CD4-positive, alpha-beta memory T cell (primary cell): ENCODE measurements at regions of chr6 and their contacts with region 1.

Region 1: DNA sequence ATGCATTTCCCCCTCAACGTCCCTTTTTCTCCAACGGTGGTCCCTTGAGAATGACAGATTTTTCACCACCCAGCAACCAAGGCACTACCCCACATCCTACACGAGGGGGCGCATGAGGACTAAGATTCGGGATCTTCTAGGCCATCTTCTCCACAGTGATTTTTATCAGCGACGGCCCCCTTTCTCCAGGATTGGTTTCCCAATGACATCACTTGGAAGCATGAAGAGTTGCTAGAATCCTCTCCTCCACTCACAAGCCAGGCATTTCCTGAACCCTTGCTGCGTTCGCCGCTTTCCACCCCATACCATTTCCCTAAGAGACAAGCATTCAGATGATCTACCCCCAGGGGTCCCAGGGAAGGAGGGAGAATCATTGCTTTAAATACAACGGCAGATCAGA is 252.0 kb downstream of the HIVEP2 start:
- DNase-seq: peak; percentile 54 to 62 (median 58)
- H3K4me3 ChIP-seq: no peak overlapping the region
- H3K4me3 Mint-ChIP-seq: peak overlapping the region in 1 of 8 donors; percentile 58
- H3K27ac ChIP-seq: no peak overlapping the region
- H3K27ac Mint-ChIP-seq: peak overlapping the region in 4 of 7 donors; percentile 0 to 74 (median 60)
- H3K4me1 ChIP-seq: peaks cover 7% of the 10 kb centered on the region
- H3K4me1 Mint-ChIP-seq: peaks cover 5 to 21% (median 8%) of the 10 kb centered on the region in 4 donors
- H3K27me3 ChIP-seq: no peaks in the 10 kb centered on the region
- H3K27me3 Mint-ChIP-seq: no peaks in the 10 kb centered on the region

Region 2: DNA sequence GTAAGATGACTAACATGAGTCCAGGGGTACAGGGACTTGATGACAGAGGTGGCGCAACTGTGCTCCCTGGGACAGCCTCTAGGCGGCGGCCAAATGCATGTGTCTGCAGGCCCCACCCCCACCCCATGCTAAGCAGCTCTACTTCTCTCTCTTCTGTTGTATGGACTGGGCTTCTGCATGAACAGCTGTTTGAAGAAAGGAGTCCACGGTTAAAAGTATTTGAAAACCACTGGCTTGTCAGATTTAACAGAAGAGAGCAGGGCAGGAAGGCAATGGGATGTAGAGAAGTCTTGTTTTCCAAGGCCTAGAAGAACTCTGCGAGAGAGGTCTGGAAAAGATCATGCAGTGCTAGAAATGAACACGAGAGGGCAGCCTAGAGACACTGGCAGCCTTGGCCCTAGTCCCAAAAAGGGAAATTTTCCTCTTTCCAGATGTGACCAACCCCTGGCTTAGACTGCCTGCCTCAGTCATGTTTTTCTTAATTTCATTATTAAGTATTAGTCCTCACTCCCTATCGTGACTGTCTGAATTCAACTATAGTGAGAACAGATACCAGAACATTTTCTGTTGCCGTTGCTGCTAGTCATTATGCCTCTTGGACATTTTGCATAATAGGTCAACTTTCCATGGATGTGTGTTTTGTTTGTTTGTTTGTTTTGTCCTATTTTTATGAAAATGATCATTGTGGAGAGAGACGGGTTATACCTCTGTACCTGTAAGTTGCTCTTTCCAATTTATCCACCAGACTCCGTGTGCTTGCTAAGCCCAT is 126.1 kb before region 1 on chr6:
- CTCF ChIA-PET with region 1: interaction called, 3 read pairs
- POLR2A ChIA-PET with region 1: no interaction called
- intact Hi-C with region 1: loop called (anchors 1 kb)
- DNase-seq: peak; percentile 47 to 49 (median 48)
- H3K4me3 ChIP-seq: no peak overlapping the region
- H3K4me3 Mint-ChIP-seq: peak overlapping the region in 2 of 8 donors; percentile 29 to 53
- H3K27ac ChIP-seq: no peak overlapping the region
- H3K27ac Mint-ChIP-seq: peak overlapping the region in 6 of 7 donors; percentile 24 to 64 (median 40)
- H3K4me1 ChIP-seq: peaks cover 52% of the 10 kb centered on the region
- H3K4me1 Mint-ChIP-seq: peaks cover 34 to 59% (median 51%) of the 10 kb centered on the region in 4 donors
- H3K27me3 ChIP-seq: no peaks in the 10 kb centered on the region
- H3K27me3 Mint-ChIP-seq: no peaks in the 10 kb centered on the region

Region 3: DNA sequence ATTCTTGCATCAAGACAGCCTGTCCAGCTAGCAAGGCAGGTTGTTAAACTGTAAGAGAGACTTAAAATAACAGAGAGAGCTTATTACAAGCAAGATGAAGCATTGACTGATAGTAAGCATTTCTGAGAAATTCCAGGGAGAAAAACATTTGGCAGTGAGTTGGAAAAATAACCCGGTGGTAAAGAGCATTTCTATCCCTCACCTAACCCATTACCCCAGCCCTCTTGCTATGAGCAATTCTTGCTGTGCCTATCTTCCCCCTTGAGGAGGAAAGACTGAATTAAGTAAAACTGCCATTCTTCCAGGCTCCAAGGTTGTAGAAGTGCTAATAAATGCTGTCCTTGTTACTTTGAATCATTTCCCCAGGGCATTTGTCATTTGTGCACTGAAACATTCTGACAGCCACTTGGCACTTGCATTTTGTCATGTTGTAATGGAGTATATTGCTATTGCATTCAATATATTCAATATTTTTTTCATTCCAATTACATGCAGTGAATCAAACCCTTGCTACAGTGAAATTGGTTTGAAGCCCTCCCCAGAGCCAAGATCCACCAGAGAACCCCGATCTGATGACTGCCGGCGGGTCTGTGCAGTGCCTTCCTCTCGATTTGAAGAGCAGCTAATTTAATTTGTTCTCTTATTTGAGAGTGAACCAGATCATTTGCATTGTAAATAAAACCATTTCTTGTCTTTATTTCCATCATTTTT is 39.1 kb before region 1 on chr6:
- CTCF ChIA-PET with region 1: no interaction called
- POLR2A ChIA-PET with region 1: no interaction called
- intact Hi-C with region 1: no loop called
- DNase-seq: no peak
- H3K4me3 ChIP-seq: no peak overlapping the region
- H3K4me3 Mint-ChIP-seq: no peak overlapping the region
- H3K27ac ChIP-seq: no peak overlapping the region
- H3K27ac Mint-ChIP-seq: no peak overlapping the region
- H3K4me1 ChIP-seq: no peaks in the 10 kb centered on the region
- H3K4me1 Mint-ChIP-seq: peaks cover 0 to 2% (median 0%) of the 10 kb centered on the region in 4 donors
- H3K27me3 ChIP-seq: no peaks in the 10 kb centered on the region
- H3K27me3 Mint-ChIP-seq: peaks cover 7 to 9% of the 10 kb centered on the region in 2 donors

Region 4: DNA sequence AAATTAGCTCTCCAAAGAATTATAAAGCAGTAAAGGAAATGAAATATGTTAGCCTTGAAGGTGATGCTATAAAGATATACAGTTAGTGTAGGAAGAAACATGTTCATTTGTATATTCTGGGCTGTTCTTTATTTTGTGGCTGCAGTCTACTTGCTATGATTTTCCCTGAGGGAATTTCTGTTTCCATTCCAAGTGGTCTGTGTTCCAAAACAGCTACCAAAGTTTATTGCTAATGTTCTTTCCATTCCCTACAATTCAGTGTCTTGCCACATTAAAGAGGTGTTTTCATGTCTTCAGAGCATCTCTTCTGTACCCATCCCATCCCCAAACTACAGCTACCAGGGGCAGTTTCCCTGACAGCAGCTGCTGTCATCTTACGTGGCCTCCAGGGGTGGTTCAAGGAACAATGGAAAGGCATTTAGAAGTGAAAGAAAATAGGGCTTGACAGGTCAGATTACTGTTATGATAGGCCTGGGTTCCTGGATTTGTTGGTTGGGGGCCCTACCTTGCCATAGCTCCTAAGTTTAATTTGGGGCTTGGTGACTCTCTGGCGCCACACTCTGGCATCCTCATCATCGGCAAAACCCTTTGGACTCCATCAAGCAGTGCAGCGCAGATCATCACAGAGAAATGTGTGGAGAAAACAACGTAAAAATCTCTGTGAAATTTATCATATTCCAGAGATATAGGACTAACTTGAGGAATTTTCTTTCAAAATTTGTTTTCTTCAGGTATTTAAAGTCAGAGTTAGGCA is 333.9 kb after region 1 on chr6:
- CTCF ChIA-PET with region 1: interaction called, 81 read pairs
- POLR2A ChIA-PET with region 1: no interaction called
- intact Hi-C with region 1: loop called (anchors 1 kb)
- DNase-seq: peak; percentile 28 to 47 (median 36)
- H3K4me3 ChIP-seq: no peak overlapping the region
- H3K4me3 Mint-ChIP-seq: no peak overlapping the region
- H3K27ac ChIP-seq: no peak overlapping the region
- H3K27ac Mint-ChIP-seq: peak overlapping the region in 2 of 7 donors; percentile 13 to 68
- H3K4me1 ChIP-seq: no peaks in the 10 kb centered on the region
- H3K4me1 Mint-ChIP-seq: peaks cover 0 to 7% (median under 1%) of the 10 kb centered on the region in 4 donors
- H3K27me3 ChIP-seq: no peaks in the 10 kb centered on the region
- H3K27me3 Mint-ChIP-seq: no peaks in the 10 kb centered on the region

Region 5: GRCh38 chr6:143337201-143337949 is 644.4 kb after region 1 on chr6:
- CTCF ChIA-PET with region 1: interaction called, 35 read pairs
- POLR2A ChIA-PET with region 1: no interaction called
- intact Hi-C with region 1: loop called (anchors 1 kb)
- DNase-seq: peak; percentile 8 to 38 (median 28)
- H3K4me3 ChIP-seq: no peak overlapping the region
- H3K4me3 Mint-ChIP-seq: no peak overlapping the region
- H3K27ac ChIP-seq: no peak overlapping the region
- H3K27ac Mint-ChIP-seq: peak overlapping the region in 1 of 7 donors; percentile 48
- H3K4me1 ChIP-seq: no peaks in the 10 kb centered on the region
- H3K4me1 Mint-ChIP-seq: no peaks in the 10 kb centered on the region
- H3K27me3 ChIP-seq: no peaks in the 10 kb centered on the region
- H3K27me3 Mint-ChIP-seq: no peaks in the 10 kb centered on the region

Region 6: DNA sequence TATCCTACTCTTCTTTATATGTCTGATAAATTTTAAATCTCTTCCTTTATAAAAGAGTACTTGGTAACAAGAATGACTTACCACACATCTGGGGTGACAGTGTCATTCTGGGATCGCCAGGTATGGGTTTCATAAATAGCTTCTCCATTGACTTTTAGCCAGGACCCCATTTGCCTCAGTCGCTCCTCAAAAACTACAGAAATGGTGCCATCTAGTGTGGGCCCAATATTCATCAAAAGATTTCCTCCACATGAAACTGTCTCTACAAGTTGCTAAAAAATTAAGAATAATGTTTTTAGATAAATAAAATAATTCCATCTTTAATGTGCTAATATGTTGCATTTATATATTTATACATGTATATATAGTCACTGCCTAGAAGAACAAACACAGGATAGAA is 808.9 kb after region 1 on chr6:
- CTCF ChIA-PET with region 1: no interaction called
- POLR2A ChIA-PET with region 1: no interaction called
- intact Hi-C with region 1: loop called (anchors 5 kb)
- DNase-seq: no peak
- H3K4me3 ChIP-seq: no peak overlapping the region
- H3K4me3 Mint-ChIP-seq: no peak overlapping the region
- H3K27ac ChIP-seq: no peak overlapping the region
- H3K27ac Mint-ChIP-seq: no peak overlapping the region
- H3K4me1 ChIP-seq: peaks cover 10% of the 10 kb centered on the region
- H3K4me1 Mint-ChIP-seq: peaks cover 13 to 21% (median 15%) of the 10 kb centered on the region in 4 donors
- H3K27me3 ChIP-seq: no peaks in the 10 kb centered on the region
- H3K27me3 Mint-ChIP-seq: no peaks in the 10 kb centered on the region